ENCODE measurements at regions of chr9 and their contacts with region 1.

Region 1: DNA sequence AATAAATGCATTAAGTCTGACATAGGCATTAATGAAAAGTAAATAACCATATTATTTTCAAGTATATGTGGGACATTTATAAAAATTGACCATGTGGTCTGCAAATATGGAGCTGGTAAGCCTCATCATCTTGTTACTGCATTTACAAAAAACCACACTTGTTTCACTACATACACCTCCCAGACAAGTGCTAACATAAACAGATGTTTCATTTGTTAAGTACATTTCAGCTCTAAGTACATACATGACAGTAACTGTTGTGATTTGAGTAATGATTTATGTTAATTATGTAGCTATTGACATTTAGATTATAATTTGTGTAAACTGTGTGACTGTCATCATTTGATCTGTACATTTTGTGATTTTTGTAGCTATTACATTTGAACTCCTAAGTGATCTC is 13.9 kb downstream of the IDNK start:
- DNase-seq: no peak
- ATAC-seq: no peak
- H3K4me3 ChIP-seq: no peak overlapping the region
- H3K27ac ChIP-seq: no peak overlapping the region
- H3K4me1 ChIP-seq: no peaks in the 10 kb centered on the region
- CTCF ChIP-seq: no peak
- EP300 ChIP-seq: no peak
- POLR2A ChIP-seq: no peak
- RAD21 ChIP-seq: no peak

Region 2: DNA sequence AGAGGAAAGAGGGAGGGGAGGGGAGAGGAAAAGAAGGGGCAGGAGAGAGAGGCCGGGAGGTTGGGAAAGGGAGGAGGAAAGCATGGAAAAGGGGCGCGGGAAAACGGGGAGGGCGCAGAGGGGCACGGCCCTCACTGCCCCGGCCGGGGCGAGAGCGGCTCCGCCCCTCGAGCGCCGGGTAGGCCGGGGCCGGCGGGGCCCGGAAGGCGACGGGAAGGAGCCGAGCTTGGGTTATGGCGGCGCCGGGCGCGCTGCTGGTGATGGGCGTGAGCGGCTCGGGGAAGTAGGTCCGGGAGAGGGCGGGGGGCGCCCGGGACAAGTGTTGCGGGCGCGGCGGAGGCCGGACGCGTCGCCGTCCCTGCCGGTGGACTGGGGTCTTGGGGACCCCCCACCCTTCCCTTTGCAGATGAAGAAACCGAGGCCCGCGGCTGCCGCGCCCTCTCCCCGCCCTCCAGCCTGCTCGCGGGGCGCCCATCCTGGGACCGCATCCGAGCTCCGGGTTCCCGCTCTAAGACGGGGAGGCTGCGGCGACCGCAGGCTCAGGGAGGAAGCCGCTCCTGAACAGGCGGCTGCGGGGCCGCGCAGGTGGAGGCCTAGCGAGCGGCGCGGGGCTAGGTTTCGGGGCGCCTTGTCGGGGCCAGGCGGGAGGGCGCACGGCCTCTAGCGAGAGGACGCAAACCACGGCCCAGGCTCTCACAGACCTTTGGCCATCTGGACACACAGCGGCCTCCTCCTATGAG is 13.7 kb before region 1 on chr9 and contains the start of gene IDNK:
- CTCF ChIA-PET with region 1: interaction called, 18 read pairs
- POLR2A ChIA-PET with region 1: no interaction called
- DNase-seq: peak; percentile 49 to 71
- ATAC-seq: peak; percentile 89 to 94
- H3K4me3 ChIP-seq: peak within 1 kb of the TSS; percentile 62
- H3K27ac ChIP-seq: peak within 1 kb of the TSS; percentile 85 to 94
- H3K4me1 ChIP-seq: peaks cover 13% of the 10 kb centered on the region
- CTCF ChIP-seq: no peak
- EP300 ChIP-seq: no peak
- POLR2A ChIP-seq: peak; percentile 64
- RAD21 ChIP-seq: no peak
- polyA plus RNA-seq, gene IDNK: 13.4 and 16.2 TPM in 2 replicates